Heart left ventricle (tissue), 16 donors: ENCODE measurements at regions of chr17 and their contacts with region 1.

Region 1: GRCh38 chr17:59155439-59156182 is at the start of gene PRR11:
- DNase-seq: peak; percentile 92 to 97 (median 95)
- ATAC-seq: peak; percentile 94 to 97 (median 96)
- H3K4me3 ChIP-seq: peak within 1 kb of the TSS; percentile 52 to 91 (median 74)
- H3K27ac ChIP-seq: peak within 1 kb of the TSS; percentile 35 to 89 (median 84)
- H3K4me1 ChIP-seq: peaks cover 0 to 37% (median 15%) of the 10 kb centered on the region in 12 donors
- H3K27me3 ChIP-seq: no peaks in the 10 kb centered on the region
- CTCF ChIP-seq: no peak
- POLR2A ChIP-seq: peak in 1 of 2 donors; percentile 7
- total RNA-seq, gene PRR11: 0.51 to 11.4 (median 1.1) TPM

Region 2: GRCh38 chr17:58800240-58800908 is 355.2 kb before region 1 on chr17:
- intact Hi-C with region 1: no loop called
- DNase-seq: no peak
- ATAC-seq: no peak
- H3K4me3 ChIP-seq: no peak overlapping the region
- H3K27ac ChIP-seq: no peak overlapping the region
- H3K4me1 ChIP-seq: no peaks in the 10 kb centered on the region
- H3K27me3 ChIP-seq: peaks cover 0 to 3% (median 0%) of the 10 kb centered on the region in 9 donors
- CTCF ChIP-seq: no peak
- POLR2A ChIP-seq: no peak

Region 3: GRCh38 chr17:59106463-59107305 is 48.9 kb before region 1 on chr17 and contains the start of gene TRIM37:
- intact Hi-C with region 1: loop called in 7 of 10 experiments (anchors 1 to 10 kb)
- DNase-seq: peak; percentile 96 to 100 (median 98)
- ATAC-seq: peak; percentile 98 to 100 (median 99)
- H3K4me3 ChIP-seq: peak within 1 kb of the TSS; percentile 78 to 100 (median 89)
- H3K27ac ChIP-seq: peak within 1 kb of the TSS; percentile 64 to 96 (median 92)
- H3K4me1 ChIP-seq: peaks cover 0 to 34% (median 19%) of the 10 kb centered on the region in 12 donors
- H3K27me3 ChIP-seq: no peaks in the 10 kb centered on the region
- CTCF ChIP-seq: peak in 2 of 12 donors; percentile 17 to 42
- POLR2A ChIP-seq: peak in 1 of 2 donors; percentile 81
- total RNA-seq, gene TRIM37: 17.2 to 26.2 (median 19.2) TPM